ENCODE measurements at regions of chr17 and their contacts with region 1.

Region 1: DNA sequence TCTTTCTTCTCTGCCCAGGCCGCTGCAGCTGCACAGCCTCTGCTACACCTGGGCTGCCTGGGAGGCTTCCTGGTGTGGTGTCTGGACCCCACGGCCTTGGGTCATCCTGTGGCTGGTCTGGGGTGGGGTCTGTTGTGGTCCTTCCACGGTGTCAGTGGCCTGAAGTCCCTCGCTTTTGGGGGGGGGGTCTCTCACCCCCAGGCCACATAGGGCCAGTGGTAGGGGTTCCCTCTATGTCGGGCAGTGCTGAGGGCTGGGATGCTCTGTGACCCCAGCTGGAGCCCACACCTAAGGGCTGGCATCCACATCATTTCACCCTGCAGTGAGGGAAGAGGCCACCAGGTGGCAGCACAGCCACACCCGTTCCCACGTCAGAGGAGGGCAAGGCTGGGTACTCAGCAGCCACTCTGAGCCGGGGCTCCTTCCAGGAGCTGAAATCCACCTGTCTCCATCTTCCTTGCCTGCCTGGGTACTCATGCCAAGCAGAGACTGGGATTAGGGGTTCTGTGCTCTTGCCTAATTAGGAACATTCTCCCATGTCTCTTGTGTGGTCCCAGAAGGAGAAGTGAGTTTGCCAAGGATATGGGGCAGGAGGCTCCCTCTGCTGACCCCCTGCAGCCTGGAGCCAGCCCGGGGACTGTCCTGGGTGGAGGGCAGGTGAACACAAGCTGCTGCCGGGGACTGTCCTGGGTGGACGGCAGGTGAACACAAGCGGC is 13.0 kb downstream of the ENGASE start:
- DNase-seq: peak; percentile 97
- H3K4me3 ChIP-seq: no peak overlapping the region; a peak in 1 of 4 replicates
- H3K27ac ChIP-seq: no peak overlapping the region
- H3K4me1 ChIP-seq: peaks cover 0 to 9% of the 10 kb centered on the region in 2 experiments; a peak in 1 of 4 replicates
- H3K27me3 ChIP-seq: no peaks in the 10 kb centered on the region
- CTCF ChIP-seq: peak; percentile 97
- EP300 ChIP-seq: no peak
- RAD21 ChIP-seq: peak; percentile 96

Region 2: DNA sequence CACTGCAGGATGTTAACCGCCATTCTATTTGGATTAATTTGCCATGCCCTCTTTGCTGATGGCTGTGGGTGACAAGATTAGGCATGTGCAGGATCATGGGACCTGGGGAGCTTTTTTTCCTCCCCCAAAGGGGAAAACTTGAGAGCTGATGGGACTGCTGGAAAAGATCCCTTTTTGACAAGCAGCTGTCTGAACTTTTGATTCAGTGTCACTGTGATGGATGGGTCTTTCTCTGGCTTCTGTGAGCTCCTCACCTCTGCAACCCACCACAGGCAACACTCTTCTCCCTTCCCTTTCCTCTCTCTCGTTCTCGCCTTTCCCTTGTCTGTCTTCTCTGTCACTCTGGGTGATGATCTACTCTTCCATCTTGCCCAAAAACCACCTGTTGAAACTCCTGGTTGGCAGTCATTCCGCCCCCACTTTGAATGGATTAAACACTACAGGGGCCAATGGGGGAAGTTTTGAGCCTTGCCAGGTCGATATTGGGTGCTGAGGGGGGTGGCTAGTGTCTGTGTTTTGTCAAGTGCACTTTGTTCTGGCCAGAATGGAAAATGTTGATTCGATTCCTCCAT is 74.9 kb before region 1 on chr17:
- CTCF ChIA-PET with region 1: interaction called, 86 read pairs
- POLR2A ChIA-PET with region 1: no interaction called
- DNase-seq: no peak
- H3K4me3 ChIP-seq: no peak overlapping the region
- H3K27ac ChIP-seq: no peak overlapping the region
- H3K4me1 ChIP-seq: peaks cover 18 to 22% of the 10 kb centered on the region in 2 experiments; a peak in 3 of 4 replicates
- H3K27me3 ChIP-seq: no peaks in the 10 kb centered on the region
- CTCF ChIP-seq: no peak
- EP300 ChIP-seq: no peak
- RAD21 ChIP-seq: no peak

Region 3: DNA sequence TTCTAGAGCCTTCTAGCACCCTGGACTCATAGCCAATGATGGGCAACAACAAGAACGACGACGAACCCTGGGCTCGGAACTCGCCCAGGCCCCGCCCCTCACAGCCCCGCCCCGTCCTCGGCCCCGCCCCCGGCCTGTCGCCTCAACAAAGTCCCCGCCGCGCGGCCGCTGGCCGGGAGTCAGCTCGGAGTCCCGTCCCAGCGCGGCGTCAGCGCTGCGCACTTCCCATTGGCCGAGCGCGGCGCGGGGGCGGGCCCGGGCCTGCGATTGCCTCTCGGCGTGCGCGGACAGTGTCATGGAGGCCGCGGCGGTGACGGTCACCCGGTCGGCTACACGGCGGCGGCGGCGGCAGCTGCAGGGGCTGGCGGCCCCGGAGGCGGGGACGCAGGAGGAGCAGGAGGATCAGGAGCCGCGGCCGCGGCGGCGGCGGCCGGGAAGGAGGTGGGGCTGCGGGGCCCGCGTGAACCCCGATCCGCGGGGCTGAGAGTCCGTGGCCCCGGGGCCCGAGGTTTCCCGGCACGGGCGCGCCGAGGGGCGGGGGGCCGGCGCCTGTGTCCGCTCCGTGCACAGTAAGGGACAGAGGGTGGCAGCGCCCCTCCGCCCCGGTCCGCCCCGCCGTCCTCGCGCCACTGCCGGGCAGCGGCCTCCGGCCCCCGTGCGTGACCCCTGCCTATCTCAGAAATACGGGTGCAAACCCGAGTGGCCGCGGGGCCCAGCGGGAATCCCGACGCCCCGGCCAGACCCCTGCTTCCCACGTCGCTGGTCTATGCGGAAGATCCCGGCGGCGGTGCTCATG is 12.7 kb before region 1 on chr17 and contains the start of gene ENGASE:
- CTCF ChIA-PET with region 1: interaction called, 37 read pairs
- POLR2A ChIA-PET with region 1: no interaction called
- DNase-seq: peak; percentile 100
- H3K4me3 ChIP-seq: peak within 1 kb of the TSS; percentile 65 to 85
- H3K27ac ChIP-seq: peak within 1 kb of the TSS in 1 of 2 experiments; percentile 29; a peak in 1 of 4 replicates
- H3K4me1 ChIP-seq: peaks cover 0 to 7% of the 10 kb centered on the region in 2 experiments; a peak in 1 of 4 replicates
- H3K27me3 ChIP-seq: no peaks in the 10 kb centered on the region; the same call in 1 of the 2 replicates
- CTCF ChIP-seq: no peak
- EP300 ChIP-seq: no peak
- RAD21 ChIP-seq: no peak
- polyA plus RNA-seq, gene ENGASE: 30.1 and 30.4 TPM in 2 replicates

Region 4: DNA sequence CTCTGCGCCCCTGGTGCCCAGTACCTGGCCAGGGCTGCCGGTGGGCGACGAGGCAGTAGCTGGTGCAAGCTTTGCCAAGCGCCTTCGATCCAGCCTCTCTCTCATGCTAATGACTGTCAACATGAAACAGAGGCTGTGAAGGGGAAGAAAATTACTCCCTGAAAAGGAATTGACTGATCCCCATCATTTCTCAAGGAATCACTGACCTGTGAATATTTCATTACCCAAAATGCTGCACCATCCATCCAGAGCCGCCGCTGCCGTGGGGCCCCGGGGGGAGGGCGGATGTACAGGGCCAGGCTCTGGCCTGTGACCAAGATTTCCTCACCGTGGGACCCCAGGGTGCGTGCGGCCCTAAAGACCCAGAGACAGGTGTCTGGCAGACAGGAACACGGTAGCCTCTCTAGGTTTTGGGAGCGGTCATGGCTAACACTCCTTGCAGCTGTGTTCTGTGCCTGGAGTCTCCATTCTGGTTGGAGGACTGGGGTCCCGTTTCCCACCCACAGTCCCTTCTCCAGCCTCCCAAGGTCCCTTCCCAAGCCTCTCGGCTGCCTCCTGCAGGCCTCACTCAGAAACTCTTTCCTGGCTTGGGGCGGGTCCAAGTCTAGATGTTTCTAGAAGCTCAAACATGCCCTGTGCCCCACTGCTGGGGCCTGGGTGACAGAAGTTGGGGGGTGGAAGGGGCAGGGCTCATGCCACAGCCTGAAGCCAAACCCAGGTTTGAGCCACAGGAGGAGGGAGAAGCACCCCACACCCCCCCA is 60.3 kb after region 1 on chr17:
- CTCF ChIA-PET with region 1: interaction called, 12 read pairs
- POLR2A ChIA-PET with region 1: no interaction called
- DNase-seq: no peak
- H3K4me3 ChIP-seq: no peak overlapping the region
- H3K27ac ChIP-seq: no peak overlapping the region
- H3K4me1 ChIP-seq: no peaks in the 10 kb centered on the region; a peak in 1 of 4 replicates
- H3K27me3 ChIP-seq: peaks cover 16% of the 10 kb centered on the region
- CTCF ChIP-seq: no peak
- EP300 ChIP-seq: no peak
- RAD21 ChIP-seq: no peak

Region 5: DNA sequence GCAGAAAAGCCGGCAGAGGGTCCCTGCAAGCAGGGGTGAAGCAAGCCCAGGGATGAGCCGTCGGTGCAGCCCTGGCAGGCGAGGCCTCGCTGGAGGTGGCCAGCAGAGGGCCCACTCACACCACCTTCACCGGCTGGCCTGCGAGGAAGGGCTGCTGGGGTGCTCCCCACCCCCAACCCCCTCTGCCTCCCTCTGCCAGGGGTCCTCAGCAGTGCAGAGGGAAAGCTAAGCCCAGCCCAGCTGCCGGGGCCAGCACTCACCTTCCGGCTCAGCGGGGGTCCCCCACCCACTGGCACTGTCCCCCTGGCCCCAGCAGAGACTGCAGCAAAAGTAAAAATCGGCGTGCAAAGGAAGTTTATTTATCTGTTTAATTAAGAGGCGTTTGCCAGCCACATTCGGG is 100.5 kb after region 1 on chr17:
- CTCF ChIA-PET with region 1: interaction called, 120 read pairs
- POLR2A ChIA-PET with region 1: no interaction called
- DNase-seq: peak; percentile 97
- H3K4me3 ChIP-seq: no peak overlapping the region
- H3K27ac ChIP-seq: no peak overlapping the region
- H3K4me1 ChIP-seq: peaks cover 0 to 3% of the 10 kb centered on the region in 2 experiments; a peak in 1 of 4 replicates
- H3K27me3 ChIP-seq: peaks cover 44% of the 10 kb centered on the region
- CTCF ChIP-seq: peak; percentile 63
- EP300 ChIP-seq: no peak
- RAD21 ChIP-seq: peak; percentile 92

Region 6: GRCh38 chr17:79360196-79360595 is 272.6 kb after region 1 on chr17:
- CTCF ChIA-PET with region 1: interaction called, 18 read pairs
- POLR2A ChIA-PET with region 1: no interaction called
- DNase-seq: no peak
- H3K4me3 ChIP-seq: no peak overlapping the region
- H3K27ac ChIP-seq: no peak overlapping the region
- H3K4me1 ChIP-seq: no peaks in the 10 kb centered on the region; a peak in 1 of 4 replicates
- H3K27me3 ChIP-seq: peaks cover 42% of the 10 kb centered on the region
- CTCF ChIP-seq: no peak
- EP300 ChIP-seq: no peak
- RAD21 ChIP-seq: no peak